ENCODE measurements at regions of chr7 and their contacts with region 1.

Region 1: DNA sequence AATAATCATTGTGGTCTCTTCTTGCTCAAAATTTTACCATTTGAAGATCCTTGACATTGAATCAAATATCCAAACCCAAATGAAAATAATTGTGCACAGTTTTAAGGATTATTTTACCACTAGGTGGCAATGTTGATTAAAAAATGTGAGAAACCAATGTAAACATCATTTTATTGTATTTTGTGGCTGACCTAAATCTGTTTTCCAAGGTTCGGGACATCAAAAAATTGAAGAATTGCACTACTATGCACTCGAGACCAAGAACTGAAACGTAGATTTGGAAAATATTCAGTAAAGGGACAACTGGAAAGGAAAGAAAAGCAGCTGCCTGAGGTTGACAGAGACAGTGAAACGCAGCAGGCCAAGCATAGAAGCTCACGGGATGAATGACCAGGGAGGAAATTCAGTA is 259.3 kb downstream of the SNX13 start:
- DNase-seq: no peak
- H3K4me3 ChIP-seq: no peak overlapping the region
- H3K27ac ChIP-seq: no peak overlapping the region
- H3K4me1 ChIP-seq: peaks cover 10 to 27% of the 10 kb centered on the region in 2 donors
- H3K27me3 ChIP-seq: no peaks in the 10 kb centered on the region
- CTCF ChIP-seq: peak; percentile 44 to 72 (median 62)
- POLR2A ChIP-seq: no peak

Region 2: DNA sequence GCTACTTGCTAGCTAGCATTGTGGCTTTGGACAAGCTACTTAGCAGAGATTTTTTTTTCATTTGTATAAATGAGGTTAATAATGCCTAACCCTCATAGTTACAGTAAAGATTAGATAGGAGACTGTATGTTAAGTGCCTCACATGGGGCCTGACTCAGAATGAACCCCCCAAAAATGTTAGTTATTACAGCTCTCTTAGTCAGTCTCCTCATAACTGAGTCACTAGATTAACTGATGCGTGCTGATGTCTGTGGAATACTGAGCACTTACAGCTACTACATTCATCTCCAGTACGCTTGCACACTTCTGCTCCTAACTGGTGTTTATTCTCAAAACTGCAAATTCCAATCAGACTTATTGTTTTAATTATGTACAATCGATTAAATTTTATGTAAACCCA is 55.9 kb before region 1 on chr7:
- intact Hi-C with region 1: no loop called
- DNase-seq: no peak
- H3K4me3 ChIP-seq: no peak overlapping the region
- H3K27ac ChIP-seq: no peak overlapping the region
- H3K4me1 ChIP-seq: peaks cover 0 to 10% of the 10 kb centered on the region in 2 donors
- H3K27me3 ChIP-seq: no peaks in the 10 kb centered on the region
- CTCF ChIP-seq: no peak
- POLR2A ChIP-seq: no peak

Region 3: GRCh38 chr7:17709127-17709526 is 28.2 kb after region 1 on chr7:
- intact Hi-C with region 1: no loop called
- DNase-seq: no peak
- H3K4me3 ChIP-seq: no peak overlapping the region
- H3K27ac ChIP-seq: no peak overlapping the region
- H3K4me1 ChIP-seq: no peaks in the 10 kb centered on the region
- H3K27me3 ChIP-seq: no peaks in the 10 kb centered on the region
- CTCF ChIP-seq: no peak
- POLR2A ChIP-seq: no peak

Region 4: GRCh38 chr7:17822547-17823173 is 141.7 kb after region 1 on chr7:
- intact Hi-C with region 1: no loop called
- DNase-seq: no peak
- H3K4me3 ChIP-seq: no peak overlapping the region
- H3K27ac ChIP-seq: no peak overlapping the region
- H3K4me1 ChIP-seq: no peaks in the 10 kb centered on the region
- H3K27me3 ChIP-seq: no peaks in the 10 kb centered on the region
- CTCF ChIP-seq: no peak
- POLR2A ChIP-seq: no peak

Region 5: GRCh38 chr7:18151422-18151821 is 470.5 kb after region 1 on chr7:
- intact Hi-C with region 1: no loop called
- DNase-seq: no peak
- H3K4me3 ChIP-seq: no peak overlapping the region
- H3K27ac ChIP-seq: no peak overlapping the region
- H3K4me1 ChIP-seq: no peaks in the 10 kb centered on the region
- H3K27me3 ChIP-seq: no peaks in the 10 kb centered on the region
- CTCF ChIP-seq: no peak
- POLR2A ChIP-seq: no peak

Region 6: DNA sequence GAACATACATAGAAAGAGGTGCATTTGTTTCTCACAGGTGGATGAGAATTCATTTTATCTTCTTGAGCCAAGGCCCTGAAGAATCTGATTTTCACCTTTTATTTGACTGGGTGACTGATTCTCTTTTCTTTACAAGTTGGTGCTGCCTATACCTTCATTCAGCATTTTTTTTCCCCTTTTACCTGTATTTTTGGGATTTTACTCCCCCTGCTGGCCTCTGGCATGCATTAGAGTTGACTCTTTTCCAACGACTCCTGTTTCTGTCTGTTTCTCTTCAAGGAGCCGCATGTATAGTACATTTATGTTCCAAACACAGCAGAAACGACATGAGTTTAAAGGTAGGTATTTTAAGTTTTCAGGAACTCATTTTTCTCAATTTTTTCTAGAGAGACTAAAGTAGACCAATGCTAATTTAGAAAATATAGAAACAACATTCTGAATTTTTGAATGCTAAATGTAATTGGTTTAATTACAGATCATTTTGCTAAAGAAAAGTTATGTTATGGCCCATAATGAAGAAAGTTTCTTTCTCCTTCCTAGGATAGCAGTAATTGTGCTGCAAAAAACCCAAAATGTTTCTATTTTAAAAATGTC is 664.8 kb after region 1 on chr7:
- intact Hi-C with region 1: loop called in 1 of 2 experiments (anchors 10 kb)
- DNase-seq: peak in 6 of 7 donors; percentile 15 to 63 (median 32)
- H3K4me3 ChIP-seq: no peak overlapping the region
- H3K27ac ChIP-seq: no peak overlapping the region
- H3K4me1 ChIP-seq: peaks cover 0 to 6% of the 10 kb centered on the region in 2 donors
- H3K27me3 ChIP-seq: peaks cover 3% of the 10 kb centered on the region
- CTCF ChIP-seq: peak; percentile 59 to 81 (median 66)
- POLR2A ChIP-seq: no peak